ENCODE measurements at regions of chr6 and their contacts with region 1.

Region 1: GRCh38 chr6:36459501-36459900 is 16.7 kb downstream of the KCTD20 start:
- DNase-seq: no peak
- ATAC-seq: no peak
- H3K4me3 ChIP-seq: no peak overlapping the region
- H3K27ac ChIP-seq: no peak overlapping the region
- H3K4me1 ChIP-seq: peaks cover 18% of the 10 kb centered on the region
- H3K27me3 ChIP-seq: no peaks in the 10 kb centered on the region
- CTCF ChIP-seq: no peak
- POLR2A ChIP-seq: no peak

Region 2: DNA sequence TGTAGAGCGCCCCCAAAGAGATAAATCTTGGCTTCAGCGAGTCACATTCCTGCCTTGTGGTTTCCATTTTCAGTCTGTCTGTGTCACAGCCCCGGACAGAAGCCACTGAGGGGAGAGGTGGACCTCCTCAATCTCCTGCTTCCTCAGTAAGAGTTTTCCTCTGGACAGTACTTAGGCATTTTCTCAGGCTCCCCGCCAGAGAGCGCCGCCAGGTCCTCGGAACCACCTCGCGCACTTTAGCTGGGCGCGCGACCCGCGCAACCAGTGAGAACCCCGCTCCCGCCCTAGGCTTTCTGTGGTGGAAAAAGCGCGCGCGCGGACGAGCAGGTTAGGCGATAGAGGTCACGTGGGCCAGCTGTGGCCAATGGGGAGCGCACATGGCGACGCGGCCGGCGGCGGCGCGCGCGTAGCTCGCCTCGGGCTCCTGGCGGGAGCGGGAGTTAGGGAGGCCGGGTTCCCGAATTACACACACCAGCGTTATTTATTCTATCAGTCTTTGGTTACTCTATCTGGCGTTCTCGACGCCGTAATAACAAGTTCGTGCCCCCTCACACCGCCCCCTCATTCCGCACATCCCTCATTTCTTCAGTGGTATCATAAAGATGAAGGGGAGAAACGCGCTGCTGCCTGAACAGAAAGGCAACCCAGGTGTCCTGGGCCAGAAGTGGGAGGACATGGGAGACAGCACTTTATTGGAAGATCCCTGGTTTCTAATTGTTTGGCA is 36.2 kb before region 1 on chr6:
- intact Hi-C with region 1: no loop called
- DNase-seq: peak; percentile 98 to 100 (median 98)
- ATAC-seq: peak; percentile 100
- H3K4me3 ChIP-seq: peak overlapping the region; percentile 22 to 24
- H3K27ac ChIP-seq: peak overlapping the region; percentile 48 to 87 (median 82)
- H3K4me1 ChIP-seq: peaks cover 7% of the 10 kb centered on the region
- H3K27me3 ChIP-seq: no peaks in the 10 kb centered on the region
- CTCF ChIP-seq: peak; percentile 37 to 88 (median 83)
- POLR2A ChIP-seq: peak; percentile 43 to 86 (median 85)

Region 3: DNA sequence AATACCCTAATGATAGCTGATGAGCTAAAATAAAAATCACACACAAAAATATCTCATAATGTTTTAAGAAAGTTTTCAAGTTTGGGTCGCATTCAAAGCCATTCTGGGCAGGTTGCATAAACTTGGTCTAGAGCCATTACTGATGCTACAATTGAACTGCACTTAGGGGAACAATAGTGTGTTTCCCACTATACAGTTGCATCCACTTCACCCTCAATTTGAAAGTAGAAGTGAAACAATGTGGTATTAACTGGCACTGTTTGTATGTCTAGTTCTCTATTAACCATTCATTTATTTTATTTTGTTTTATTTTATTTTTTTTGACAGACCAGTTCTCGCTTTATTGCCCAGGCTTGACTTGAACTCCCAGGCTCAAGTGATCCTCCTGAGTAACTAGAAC is 110.8 kb after region 1 on chr6:
- intact Hi-C with region 1: loop called (anchors 10 kb)
- DNase-seq: no peak
- ATAC-seq: no peak
- H3K4me3 ChIP-seq: no peak overlapping the region
- H3K27ac ChIP-seq: no peak overlapping the region
- H3K4me1 ChIP-seq: no peaks in the 10 kb centered on the region
- H3K27me3 ChIP-seq: no peaks in the 10 kb centered on the region
- CTCF ChIP-seq: no peak
- POLR2A ChIP-seq: no peak

Measured in body of pancreas (tissue), 4 donors.